ENCODE measurements at regions of chr2 and their contacts with region 1.

Region 1: GRCh38 chr2:112481050-112481527 is 867 bp upstream of the TTL start:
- DNase-seq: peak; percentile 96
- H3K4me3 Mint-ChIP-seq: peak overlapping the region; percentile 94
- H3K27ac Mint-ChIP-seq: peak overlapping the region; percentile 97
- H3K4me1 Mint-ChIP-seq: peaks cover 34% of the 10 kb centered on the region
- H3K27me3 Mint-ChIP-seq: peaks cover 2% of the 10 kb centered on the region

Region 2: DNA sequence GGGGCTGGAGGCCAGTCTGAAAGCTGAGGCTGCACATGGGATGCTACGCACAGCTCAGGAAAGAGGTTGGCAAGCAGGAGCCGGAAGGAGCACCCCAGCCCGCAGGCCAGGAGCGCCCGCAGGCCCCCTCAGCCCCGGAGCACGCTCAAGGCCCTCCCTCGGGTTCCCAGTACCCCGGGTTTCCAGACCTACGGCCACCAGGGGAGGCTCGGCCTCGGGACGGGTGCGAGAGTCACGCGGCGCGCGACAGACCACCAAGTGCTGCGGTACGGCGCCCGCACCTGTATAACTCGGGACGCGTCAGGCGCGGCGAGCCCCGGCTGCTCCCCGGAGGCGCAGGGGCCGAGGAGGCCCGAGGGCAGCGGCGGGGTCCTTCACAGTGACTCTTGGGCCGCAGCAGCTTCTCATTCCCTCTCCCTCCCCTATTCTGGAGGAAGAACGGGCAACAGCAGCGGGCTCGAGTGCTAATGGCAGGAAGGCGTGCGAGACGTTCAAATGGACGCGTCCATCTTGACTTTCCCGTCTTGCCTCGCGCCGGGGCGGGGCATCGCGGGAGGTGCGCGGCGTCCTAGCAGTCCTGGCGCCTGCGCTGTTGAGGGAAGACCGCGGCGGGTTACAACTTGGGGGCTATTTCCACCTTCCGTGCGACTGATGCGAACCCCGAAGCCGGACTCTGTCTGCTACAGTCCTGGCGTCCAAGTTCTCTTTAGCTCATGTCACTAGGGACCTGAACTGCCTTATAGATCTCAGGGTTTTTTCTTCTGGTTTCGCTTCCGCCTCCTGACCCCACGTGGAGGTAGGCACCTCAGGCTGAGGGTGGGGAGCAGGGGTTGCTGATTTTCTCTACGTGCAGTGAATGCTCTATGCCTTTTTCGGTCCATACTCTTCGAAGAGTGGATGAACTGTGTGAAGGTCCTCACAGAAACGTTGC is 597.2 kb before region 1 on chr2 and contains the start of gene ANAPC1:
- intact Hi-C with region 1: loop called (anchors 2 kb)
- DNase-seq: peak; percentile 96
- H3K4me3 Mint-ChIP-seq: peak within 1 kb of the TSS; percentile 93
- H3K27ac Mint-ChIP-seq: peak within 1 kb of the TSS; percentile 93
- H3K4me1 Mint-ChIP-seq: peaks cover 12% of the 10 kb centered on the region
- H3K27me3 Mint-ChIP-seq: no peaks in the 10 kb centered on the region
- total RNA-seq, gene ANAPC1: 129 and 133 TPM in 2 replicates

Region 3: GRCh38 chr2:112187805-112188596 is 293.1 kb before region 1 on chr2:
- intact Hi-C with region 1: loop called (anchors 1 kb)
- DNase-seq: peak; percentile 91
- H3K4me3 Mint-ChIP-seq: peak overlapping the region; percentile 77
- H3K27ac Mint-ChIP-seq: peak overlapping the region; percentile 94
- H3K4me1 Mint-ChIP-seq: peaks cover 76% of the 10 kb centered on the region
- H3K27me3 Mint-ChIP-seq: peaks cover 2% of the 10 kb centered on the region

Region 4: GRCh38 chr2:112275306-112275886 is 205.7 kb before region 1 on chr2 and contains the start of gene ZC3H6:
- intact Hi-C with region 1: loop called (anchors 1 kb)
- DNase-seq: peak; percentile 100
- H3K4me3 Mint-ChIP-seq: peak within 1 kb of the TSS; percentile 92
- H3K27ac Mint-ChIP-seq: peak within 1 kb of the TSS; percentile 99
- H3K4me1 Mint-ChIP-seq: peaks cover 8% of the 10 kb centered on the region
- H3K27me3 Mint-ChIP-seq: no peaks in the 10 kb centered on the region
- total RNA-seq, gene ZC3H6: 4.9 and 6.2 TPM in 2 replicates

Region 5: GRCh38 chr2:112343827-112344585 is 137.1 kb before region 1 on chr2:
- intact Hi-C with region 1: no loop called
- DNase-seq: no peak
- H3K4me3 Mint-ChIP-seq: no peak overlapping the region
- H3K27ac Mint-ChIP-seq: no peak overlapping the region
- H3K4me1 Mint-ChIP-seq: peaks cover 6% of the 10 kb centered on the region
- H3K27me3 Mint-ChIP-seq: peaks cover 3% of the 10 kb centered on the region

Region 6: GRCh38 chr2:112451317-112451716 is 29.8 kb before region 1 on chr2:
- intact Hi-C with region 1: no loop called
- DNase-seq: no peak
- H3K4me3 Mint-ChIP-seq: no peak overlapping the region
- H3K27ac Mint-ChIP-seq: no peak overlapping the region
- H3K4me1 Mint-ChIP-seq: no peaks in the 10 kb centered on the region
- H3K27me3 Mint-ChIP-seq: peaks cover 7% of the 10 kb centered on the region

Region 7: DNA sequence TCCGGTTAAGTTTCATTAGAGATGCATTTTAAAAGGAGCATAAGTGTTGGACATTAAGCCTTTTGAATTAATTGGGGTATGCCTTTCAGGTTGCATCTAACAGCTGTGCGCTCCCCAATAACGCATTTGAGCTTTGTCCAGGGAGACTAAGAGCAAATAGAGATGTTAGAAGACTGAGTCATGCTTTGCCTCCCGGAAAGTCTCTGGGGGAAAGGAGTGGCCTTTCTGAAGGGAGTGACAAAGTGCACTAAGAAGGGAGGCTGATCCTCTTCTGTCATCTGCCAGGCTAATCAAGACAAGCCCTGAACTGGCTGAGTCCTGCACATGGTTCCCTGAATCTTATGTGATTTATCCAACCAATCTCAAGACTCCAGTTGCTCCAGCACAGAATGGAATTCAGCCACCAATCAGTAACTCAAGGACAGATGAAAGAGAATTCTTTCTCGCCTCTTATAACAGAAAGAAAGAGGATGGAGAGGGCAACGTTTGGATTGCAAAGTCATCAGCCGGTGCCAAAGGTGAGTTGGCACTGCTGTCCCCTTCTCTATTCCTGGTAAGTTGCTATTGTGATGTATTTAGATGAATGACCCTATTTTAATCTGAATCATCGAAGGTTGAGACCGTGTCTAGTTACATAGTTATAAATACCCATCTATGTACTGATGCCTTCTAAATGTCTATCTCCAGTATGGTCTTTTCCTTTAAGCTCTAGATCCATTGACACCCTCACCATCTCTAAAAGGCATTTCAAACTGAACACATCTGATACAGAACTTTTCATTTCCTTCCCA is 13.0 kb after region 1 on chr2:
- intact Hi-C with region 1: no loop called
- DNase-seq: peak; percentile 44
- H3K4me3 Mint-ChIP-seq: no peak overlapping the region
- H3K27ac Mint-ChIP-seq: no peak overlapping the region
- H3K4me1 Mint-ChIP-seq: peaks cover 2% of the 10 kb centered on the region
- H3K27me3 Mint-ChIP-seq: no peaks in the 10 kb centered on the region

Region 8: GRCh38 chr2:112542123-112542983 is 61.3 kb after region 1 on chr2 and contains the start of gene POLR1B:
- intact Hi-C with region 1: loop called (anchors 1 kb)
- DNase-seq: peak; percentile 94
- H3K4me3 Mint-ChIP-seq: no peak within 1 kb of the TSS
- H3K27ac Mint-ChIP-seq: no peak within 1 kb of the TSS
- H3K4me1 Mint-ChIP-seq: peaks cover 9% of the 10 kb centered on the region
- H3K27me3 Mint-ChIP-seq: no peaks in the 10 kb centered on the region
- total RNA-seq, gene POLR1B: 71.9 and 84.5 TPM in 2 replicates

Region 9: GRCh38 chr2:112584134-112584890 is 103.2 kb after region 1 on chr2 and contains the start of gene CHCHD5:
- intact Hi-C with region 1: loop called (anchors 1 kb)
- DNase-seq: peak; percentile 98
- H3K4me3 Mint-ChIP-seq: peak within 1 kb of the TSS; percentile 93
- H3K27ac Mint-ChIP-seq: peak within 1 kb of the TSS; percentile 99
- H3K4me1 Mint-ChIP-seq: peaks cover 33% of the 10 kb centered on the region
- H3K27me3 Mint-ChIP-seq: no peaks in the 10 kb centered on the region
- total RNA-seq, gene CHCHD5: 36.4 and 37.6 TPM in 2 replicates

Measured in activated CD4-positive, alpha-beta T cell treated with anti-CD3 and anti-CD28 coated beads, Interleukin-2, amount 10 ng/mL, durations not matched to agents 24 days and 14 days (primary cell).